ENCODE measurements at regions of chr17 and their contacts with region 1.

Region 1: DNA sequence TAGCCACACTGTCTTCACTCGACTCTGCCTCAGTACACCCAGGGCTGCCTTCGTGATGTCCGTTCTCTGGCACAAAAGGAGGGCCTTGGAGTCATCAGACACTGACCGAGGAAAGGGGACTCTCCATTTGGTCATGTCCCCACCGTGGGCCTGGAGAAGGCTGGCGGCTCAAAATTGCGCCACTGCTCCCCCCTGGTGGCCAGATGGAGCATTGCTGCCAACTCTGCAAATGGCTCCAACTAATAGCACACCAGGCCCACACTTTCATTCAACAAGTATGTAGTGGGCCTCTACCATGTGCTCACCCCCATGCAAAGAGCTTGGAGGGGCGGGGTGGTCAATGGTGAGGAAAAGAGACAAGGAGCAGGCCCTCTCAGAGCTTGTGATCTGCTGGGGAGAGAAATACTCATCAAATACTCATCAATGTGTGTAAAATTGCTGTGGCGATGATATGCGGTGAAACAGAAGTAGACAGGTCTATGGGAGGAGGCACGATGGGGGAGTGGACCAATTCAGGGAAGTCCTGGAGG is 5.2 kb upstream of the GRIN2C start:
- DNase-seq: peak; percentile 83
- H3K4me3 Mint-ChIP-seq: no peak overlapping the region
- H3K27ac Mint-ChIP-seq: no peak overlapping the region
- H3K4me1 Mint-ChIP-seq: peaks cover 7% of the 10 kb centered on the region
- H3K27me3 Mint-ChIP-seq: peaks cover 19% of the 10 kb centered on the region
- CTCF ChIP-seq: peak; percentile 96

Region 2: DNA sequence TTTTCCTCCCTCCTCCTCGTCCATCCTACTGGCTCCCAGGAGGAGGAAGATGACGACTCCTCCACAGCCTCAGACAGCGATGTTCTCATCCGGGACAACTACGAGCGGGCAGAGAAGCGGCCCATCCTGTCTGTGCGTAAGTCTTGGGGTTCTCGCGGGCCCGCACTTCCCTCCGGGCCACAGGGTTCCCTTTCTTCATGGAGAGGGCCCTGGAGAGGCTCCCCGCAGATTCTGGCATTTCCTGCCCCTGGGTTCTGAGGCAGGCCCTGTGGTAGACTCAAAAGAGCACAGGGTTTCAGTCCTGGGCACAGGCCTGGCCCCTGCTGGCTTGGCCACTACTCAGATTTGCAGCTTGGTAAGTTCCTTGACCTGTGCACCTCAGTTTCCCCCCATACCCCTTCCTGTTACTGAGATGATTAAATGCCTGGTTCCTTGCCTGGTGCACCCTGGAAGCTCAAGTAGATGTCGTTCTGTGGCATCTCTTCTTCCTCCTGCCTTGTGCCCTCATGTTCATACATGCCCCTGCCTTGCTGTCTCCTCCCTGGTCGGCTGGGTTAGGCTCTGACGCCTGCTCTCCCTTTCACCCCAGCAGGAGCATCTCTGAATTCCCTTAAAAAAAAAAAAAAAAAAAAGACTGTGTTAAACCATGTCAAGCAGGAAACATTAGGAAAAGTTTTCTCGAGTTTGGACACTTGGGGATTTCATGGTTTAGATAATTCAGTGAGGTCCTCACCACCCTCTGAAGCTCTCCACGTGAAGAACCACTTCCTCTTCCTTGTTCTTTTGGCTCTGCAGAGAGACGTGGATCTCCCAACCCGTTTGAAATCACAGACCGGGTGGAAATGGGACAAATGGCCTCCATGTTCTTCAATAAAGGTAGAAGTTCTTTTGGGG is 74.5 kb before region 1 on chr17:
- CTCF ChIA-PET with region 1: interaction called, 3 read pairs
- intact Hi-C with region 1: loop called (anchors 2 kb)
- DNase-seq: no peak
- H3K4me3 Mint-ChIP-seq: no peak overlapping the region
- H3K27ac Mint-ChIP-seq: no peak overlapping the region
- H3K4me1 Mint-ChIP-seq: no peaks in the 10 kb centered on the region
- H3K27me3 Mint-ChIP-seq: no peaks in the 10 kb centered on the region
- CTCF ChIP-seq: no peak